PC-3 (cell line): ENCODE measurements at regions of chr1 and their contacts with region 1.

Region 1: GRCh38 chr1:26993237-26994019 is at the start of gene TRNP1:
- DNase-seq: peak; percentile 89
- ATAC-seq: peak; percentile 30
- H3K4me3 ChIP-seq: peak within 1 kb of the TSS; percentile 88
- H3K27ac ChIP-seq: peak within 1 kb of the TSS; percentile 52
- H3K4me1 ChIP-seq: peaks cover 55% of the 10 kb centered on the region
- H3K27me3 ChIP-seq: no peaks in the 10 kb centered on the region
- CTCF ChIP-seq: no peak
- total RNA-seq, gene TRNP1: 108 and 109 TPM in 2 replicates

Region 2: DNA sequence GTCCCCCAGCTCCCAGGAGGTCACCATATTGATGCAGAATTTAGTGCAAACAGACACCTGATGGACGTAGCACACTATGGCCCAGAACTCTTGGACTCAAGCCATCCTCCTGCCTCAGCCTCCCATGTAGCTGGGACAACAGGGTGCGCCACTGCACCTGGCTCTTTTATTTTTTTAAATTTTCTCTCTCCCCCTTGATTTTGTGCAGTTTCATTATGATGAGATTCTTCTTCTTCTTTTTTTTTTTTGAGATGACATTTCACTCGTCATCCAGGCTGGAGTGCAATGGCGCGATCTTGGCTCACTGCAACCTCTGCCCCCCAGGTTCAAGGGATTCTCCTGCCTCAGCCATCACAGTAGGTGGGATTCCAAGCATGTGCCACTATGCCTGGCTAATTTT is 400.0 kb before region 1 on chr1:
- CTCF ChIA-PET with region 1: no interaction called
- POLR2A ChIA-PET with region 1: no interaction called
- intact Hi-C with region 1: no loop called
- DNase-seq: no peak
- ATAC-seq: no peak
- H3K4me3 ChIP-seq: no peak overlapping the region
- H3K27ac ChIP-seq: no peak overlapping the region
- H3K4me1 ChIP-seq: no peaks in the 10 kb centered on the region
- H3K27me3 ChIP-seq: no peaks in the 10 kb centered on the region
- CTCF ChIP-seq: no peak

Region 3: DNA sequence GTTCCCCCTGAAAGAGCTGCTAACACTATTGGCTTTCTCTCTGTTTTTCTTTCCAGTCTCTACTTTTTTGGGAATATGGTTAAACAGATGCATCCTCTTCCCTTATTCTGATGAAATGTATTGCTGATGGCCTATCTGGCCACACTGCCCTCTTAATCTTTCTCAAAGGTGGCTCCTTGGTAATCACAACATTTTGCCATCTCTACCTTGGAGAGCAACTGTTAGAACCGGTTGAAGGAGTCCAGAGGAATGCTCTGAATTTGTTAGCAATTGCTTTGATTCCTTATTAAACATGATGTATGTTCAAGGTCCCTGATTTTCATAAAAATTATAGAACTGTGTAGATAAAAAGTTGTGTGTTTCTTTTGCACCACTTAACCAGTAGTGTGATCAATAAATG is 347.7 kb before region 1 on chr1:
- CTCF ChIA-PET with region 1: no interaction called
- POLR2A ChIA-PET with region 1: no interaction called
- intact Hi-C with region 1: no loop called
- DNase-seq: no peak
- ATAC-seq: no peak
- H3K4me3 ChIP-seq: no peak overlapping the region
- H3K27ac ChIP-seq: no peak overlapping the region
- H3K4me1 ChIP-seq: no peaks in the 10 kb centered on the region
- H3K27me3 ChIP-seq: no peaks in the 10 kb centered on the region
- CTCF ChIP-seq: no peak

Region 4: DNA sequence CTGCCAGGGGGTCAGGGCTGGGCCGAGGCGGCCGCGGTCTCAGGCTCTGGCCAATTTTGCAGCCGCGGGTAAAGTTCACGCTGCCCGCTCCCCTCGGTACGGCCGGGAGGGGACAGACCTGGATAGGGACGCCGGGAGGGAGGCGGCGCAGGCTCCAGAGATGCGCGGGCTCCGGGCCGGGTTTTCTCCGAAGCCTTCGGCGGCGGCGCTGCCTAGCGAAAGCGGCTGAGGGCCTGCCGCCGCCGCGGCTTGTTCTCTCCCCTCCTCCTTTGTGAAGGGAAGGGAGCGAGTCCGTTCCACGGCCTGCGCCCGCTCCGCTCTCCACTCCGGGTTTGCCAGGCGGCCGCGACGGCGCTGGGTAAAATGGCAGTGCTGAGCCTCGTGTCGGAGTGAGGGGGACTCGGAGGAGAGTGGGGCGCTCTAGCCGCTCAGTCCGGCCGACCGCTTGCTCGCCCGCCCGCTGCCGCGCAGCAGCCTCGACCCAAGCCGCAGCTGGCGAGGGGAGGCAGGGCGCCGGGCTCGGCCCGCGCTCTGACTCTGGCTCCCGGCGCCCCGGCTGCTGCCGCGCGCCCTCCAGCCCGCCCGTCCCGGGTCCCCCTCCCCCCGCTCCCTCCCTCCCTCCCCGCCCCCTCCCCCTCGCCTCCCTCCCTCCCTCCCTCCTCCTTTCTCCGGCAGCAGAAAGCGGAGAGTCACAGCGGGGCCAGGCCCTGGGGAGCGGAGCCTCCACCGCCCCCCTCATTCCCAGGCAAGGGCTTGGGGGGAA is 297.9 kb before region 1 on chr1 and contains the start of gene ARID1A:
- CTCF ChIA-PET with region 1: no interaction called
- POLR2A ChIA-PET with region 1: no interaction called
- intact Hi-C with region 1: no loop called
- DNase-seq: peak; percentile 96
- ATAC-seq: peak; percentile 52
- H3K4me3 ChIP-seq: peak within 1 kb of the TSS; percentile 86
- H3K27ac ChIP-seq: peak within 1 kb of the TSS; percentile 81
- H3K4me1 ChIP-seq: peaks cover 49% of the 10 kb centered on the region
- H3K27me3 ChIP-seq: no peaks in the 10 kb centered on the region
- CTCF ChIP-seq: no peak
- total RNA-seq, gene ARID1A: 43.8 and 78.0 TPM in 2 replicates

Region 5: DNA sequence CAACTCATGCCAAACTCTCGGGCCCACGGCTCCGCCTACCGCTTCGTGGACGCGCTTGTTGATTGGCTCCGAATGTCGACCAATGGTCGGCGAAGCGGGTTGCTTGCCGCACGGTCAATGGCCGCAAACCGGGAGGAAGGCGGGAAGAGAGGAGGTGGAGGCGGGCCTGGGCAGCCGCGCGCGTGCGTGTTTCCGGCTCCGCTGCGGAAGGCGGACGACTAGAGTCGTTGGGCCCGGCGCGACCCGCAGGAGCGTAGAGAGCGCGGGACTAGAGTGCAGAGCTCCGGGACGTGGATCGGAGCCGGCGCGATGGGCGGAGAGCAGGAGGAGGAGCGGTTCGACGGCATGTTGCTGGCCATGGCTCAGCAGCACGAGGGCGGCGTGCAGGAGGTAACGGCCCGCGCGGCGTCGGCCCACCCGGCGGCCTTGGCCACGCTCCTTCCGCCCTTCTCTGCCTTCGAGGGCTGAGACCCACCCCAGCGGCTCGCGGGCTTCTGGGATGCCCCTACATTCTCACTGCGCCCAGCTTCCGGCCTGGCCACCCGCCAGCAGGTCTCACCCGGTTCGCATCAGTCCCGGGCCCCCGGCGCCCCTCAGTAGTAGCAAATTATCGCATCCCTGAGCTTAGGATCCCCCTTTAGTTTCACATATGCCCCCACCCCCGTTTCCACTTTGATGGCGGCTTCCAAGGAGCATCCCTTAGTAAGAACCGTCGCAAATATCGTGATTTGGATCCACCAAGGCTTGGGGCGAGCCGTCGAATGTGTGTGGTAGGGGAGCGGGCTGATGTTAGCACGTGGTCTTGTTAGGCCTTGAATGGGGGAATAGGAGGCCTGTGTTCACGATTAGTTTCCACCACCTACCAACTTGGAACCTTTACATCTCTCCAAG is 71.6 kb before region 1 on chr1 and contains the start of gene NUDC:
- CTCF ChIA-PET with region 1: no interaction called
- POLR2A ChIA-PET with region 1: no interaction called
- intact Hi-C with region 1: loop called (anchors 2 kb)
- DNase-seq: peak; percentile 98
- ATAC-seq: peak; percentile 92
- H3K4me3 ChIP-seq: peak within 1 kb of the TSS; percentile 83
- H3K27ac ChIP-seq: peak within 1 kb of the TSS; percentile 67
- H3K4me1 ChIP-seq: peaks cover 30% of the 10 kb centered on the region
- H3K27me3 ChIP-seq: no peaks in the 10 kb centered on the region
- CTCF ChIP-seq: no peak
- total RNA-seq, gene NUDC: 149 and 198 TPM in 2 replicates

Region 6: GRCh38 chr1:26959722-26960615 is 33.5 kb before region 1 on chr1 and contains the start of gene KDF1:
- CTCF ChIA-PET with region 1: interaction called, 13 read pairs
- POLR2A ChIA-PET with region 1: interaction called, 7 read pairs
- intact Hi-C with region 1: no loop called
- DNase-seq: peak; percentile 90
- ATAC-seq: peak; percentile 77
- H3K4me3 ChIP-seq: peak within 1 kb of the TSS; percentile 94
- H3K27ac ChIP-seq: peak within 1 kb of the TSS; percentile 43
- H3K4me1 ChIP-seq: peaks cover 25% of the 10 kb centered on the region
- H3K27me3 ChIP-seq: no peaks in the 10 kb centered on the region
- CTCF ChIP-seq: peak; percentile 26; the same call in 1 of the 2 replicates
- total RNA-seq, gene KDF1: 21.7 and 22.9 TPM in 2 replicates

Region 7: DNA sequence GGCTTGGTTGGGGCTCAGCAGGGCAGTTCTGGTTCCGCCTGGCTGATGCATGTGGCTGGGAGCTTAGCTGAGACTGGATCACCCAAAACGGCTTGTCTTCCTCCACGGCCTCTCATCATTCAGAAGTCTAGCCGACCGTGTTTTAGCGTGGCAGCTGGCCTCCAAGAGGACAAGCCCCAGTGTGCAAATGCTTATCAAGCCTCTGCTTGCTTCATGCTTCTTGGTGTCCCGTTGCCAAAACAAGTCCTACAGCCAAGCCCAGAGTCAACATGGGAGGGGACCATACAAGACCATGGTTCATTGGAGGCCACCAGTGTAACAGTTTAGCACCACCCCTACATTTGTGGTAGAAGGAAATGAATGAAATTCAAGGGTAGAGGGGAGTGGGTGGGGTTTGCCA is 22.6 kb before region 1 on chr1:
- CTCF ChIA-PET with region 1: interaction called, 3 read pairs
- POLR2A ChIA-PET with region 1: interaction called, 10 read pairs
- intact Hi-C with region 1: loop called (anchors 1 kb)
- DNase-seq: no peak
- ATAC-seq: no peak; the same call in 1 of the 2 replicates
- H3K4me3 ChIP-seq: no peak overlapping the region
- H3K27ac ChIP-seq: no peak overlapping the region
- H3K4me1 ChIP-seq: no peaks in the 10 kb centered on the region
- H3K27me3 ChIP-seq: no peaks in the 10 kb centered on the region
- CTCF ChIP-seq: no peak

Region 8: DNA sequence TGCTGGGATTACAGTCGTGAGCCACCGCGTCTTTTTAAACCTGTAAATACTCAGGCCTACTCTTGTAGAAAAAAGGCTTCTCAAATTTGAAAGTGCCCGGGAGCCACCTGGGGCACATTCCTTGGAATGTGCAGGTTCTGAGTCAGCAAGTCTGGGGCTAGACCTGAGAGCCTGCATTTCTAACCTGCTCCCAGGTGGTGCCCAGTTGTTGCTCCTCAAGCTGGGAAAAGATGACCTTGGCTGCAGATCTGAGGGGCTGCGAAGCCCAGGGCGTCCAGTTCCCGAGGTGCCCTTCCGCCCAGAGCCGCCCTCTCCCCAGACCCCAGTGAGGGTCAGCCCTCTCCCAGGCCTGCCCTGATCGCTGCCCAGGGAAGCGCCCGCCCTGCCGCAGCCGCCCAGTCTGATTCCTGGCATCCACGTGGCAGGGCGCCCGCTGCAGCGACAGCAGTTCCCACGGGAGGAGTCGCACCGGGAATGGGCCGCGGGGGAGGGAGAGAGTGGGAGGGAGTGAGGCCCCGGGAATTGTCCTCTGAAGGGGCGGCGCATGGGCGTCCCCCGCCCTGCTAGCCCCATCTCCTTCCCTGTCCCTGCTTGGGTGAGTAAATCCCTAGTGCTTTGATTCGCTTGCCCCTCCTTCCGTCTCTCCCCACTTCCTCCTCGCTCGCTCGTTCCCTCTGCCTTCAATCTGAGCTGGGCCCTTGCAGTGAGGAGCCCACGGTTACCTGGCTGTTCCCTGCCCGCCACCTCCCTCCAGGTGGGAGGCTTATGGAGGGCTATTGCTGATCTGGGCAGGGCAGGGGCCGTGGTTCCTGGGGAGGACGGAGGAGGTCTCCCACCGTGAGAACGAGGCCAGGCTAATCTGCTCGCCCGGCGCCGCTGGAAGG is 38.0 kb after region 1 on chr1:
- CTCF ChIA-PET with region 1: interaction called, 3 read pairs
- POLR2A ChIA-PET with region 1: no interaction called
- intact Hi-C with region 1: loop called (anchors 2 kb)
- DNase-seq: peak; percentile 92
- ATAC-seq: peak; percentile 89
- H3K4me3 ChIP-seq: peak overlapping the region; percentile 60
- H3K27ac ChIP-seq: peak overlapping the region; percentile 93
- H3K4me1 ChIP-seq: peaks cover 16% of the 10 kb centered on the region
- H3K27me3 ChIP-seq: no peaks in the 10 kb centered on the region
- CTCF ChIP-seq: no peak

Region 9: GRCh38 chr1:27044613-27045151 is 51.3 kb after region 1 on chr1:
- CTCF ChIA-PET with region 1: interaction called, 5 read pairs
- POLR2A ChIA-PET with region 1: no interaction called
- intact Hi-C with region 1: loop called (anchors 1 kb)
- DNase-seq: peak; percentile 95
- ATAC-seq: peak; percentile 94
- H3K4me3 ChIP-seq: peak overlapping the region; percentile 49; the same call in 1 of the 2 replicates
- H3K27ac ChIP-seq: no peak overlapping the region
- H3K4me1 ChIP-seq: peaks cover 4% of the 10 kb centered on the region; the same call in 1 of the 2 replicates
- H3K27me3 ChIP-seq: no peaks in the 10 kb centered on the region
- CTCF ChIP-seq: peak; percentile 93

Region 10: GRCh38 chr1:27097484-27097917 is 104.1 kb after region 1 on chr1:
- CTCF ChIA-PET with region 1: interaction called, 5 read pairs
- POLR2A ChIA-PET with region 1: interaction called, 3 read pairs
- intact Hi-C with region 1: loop called (anchors 2 kb)
- DNase-seq: peak; percentile 86
- ATAC-seq: peak; percentile 56
- H3K4me3 ChIP-seq: no peak overlapping the region
- H3K27ac ChIP-seq: no peak overlapping the region
- H3K4me1 ChIP-seq: peaks cover 28% of the 10 kb centered on the region
- H3K27me3 ChIP-seq: no peaks in the 10 kb centered on the region
- CTCF ChIP-seq: peak; percentile 94